Activated T-helper 1 cell treated with anti-CD3 and anti-CD28 coated beads, Interleukin-12 subunit alpha, Interleukin-12 subunit beta, Interleukin-2, Interleukin-4 antibody, amounts not matched to agents 30 ng/mL and 10 ng/mL and 1 ng/mL, durations not matched to agents 14 hours and 24 hours and 36 hours (primary cell): ENCODE measurements at regions of chrX and their contacts with region 1.

Region 1: DNA sequence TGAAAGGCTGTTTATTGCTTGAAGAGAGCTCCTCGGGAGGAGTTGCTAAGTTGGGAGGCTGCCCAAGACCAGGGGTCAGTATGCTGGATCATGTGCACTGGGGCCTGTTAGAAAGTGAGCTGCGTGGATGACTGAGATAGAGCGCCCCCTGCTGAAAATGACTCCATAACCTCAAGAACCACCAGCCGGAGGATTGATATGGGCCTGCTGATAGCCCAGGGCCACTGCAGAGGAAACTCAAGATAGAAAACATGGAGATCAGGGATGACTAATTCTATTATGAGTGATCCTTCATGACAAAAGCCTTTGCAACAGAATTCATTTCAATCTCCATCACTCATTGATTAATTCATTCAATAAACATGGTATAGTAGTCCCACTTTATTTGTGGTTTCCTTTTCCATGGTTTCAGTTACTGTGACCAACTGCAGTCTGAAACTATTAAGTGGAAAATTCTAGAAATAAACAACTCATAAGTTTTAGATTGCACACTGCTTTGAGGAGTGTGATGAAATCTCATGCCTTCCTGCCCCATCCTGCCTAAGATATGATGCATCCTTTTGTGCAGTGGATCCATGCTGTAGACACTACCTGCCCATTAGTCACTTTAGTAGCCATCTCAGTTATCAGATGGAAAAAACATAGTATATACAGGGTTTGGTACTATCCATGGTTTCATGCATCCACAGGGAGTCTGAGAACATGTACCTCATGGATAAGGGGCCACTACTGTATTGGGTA is 126.7 kb upstream of the MBNL3 start:
- DNase-seq: peak; percentile 5
- H3K4me3 Mint-ChIP-seq: no peak overlapping the region
- H3K27ac Mint-ChIP-seq: peak overlapping the region; percentile 2
- H3K4me1 Mint-ChIP-seq: no peaks in the 10 kb centered on the region
- H3K27me3 Mint-ChIP-seq: no peaks in the 10 kb centered on the region

Region 2: DNA sequence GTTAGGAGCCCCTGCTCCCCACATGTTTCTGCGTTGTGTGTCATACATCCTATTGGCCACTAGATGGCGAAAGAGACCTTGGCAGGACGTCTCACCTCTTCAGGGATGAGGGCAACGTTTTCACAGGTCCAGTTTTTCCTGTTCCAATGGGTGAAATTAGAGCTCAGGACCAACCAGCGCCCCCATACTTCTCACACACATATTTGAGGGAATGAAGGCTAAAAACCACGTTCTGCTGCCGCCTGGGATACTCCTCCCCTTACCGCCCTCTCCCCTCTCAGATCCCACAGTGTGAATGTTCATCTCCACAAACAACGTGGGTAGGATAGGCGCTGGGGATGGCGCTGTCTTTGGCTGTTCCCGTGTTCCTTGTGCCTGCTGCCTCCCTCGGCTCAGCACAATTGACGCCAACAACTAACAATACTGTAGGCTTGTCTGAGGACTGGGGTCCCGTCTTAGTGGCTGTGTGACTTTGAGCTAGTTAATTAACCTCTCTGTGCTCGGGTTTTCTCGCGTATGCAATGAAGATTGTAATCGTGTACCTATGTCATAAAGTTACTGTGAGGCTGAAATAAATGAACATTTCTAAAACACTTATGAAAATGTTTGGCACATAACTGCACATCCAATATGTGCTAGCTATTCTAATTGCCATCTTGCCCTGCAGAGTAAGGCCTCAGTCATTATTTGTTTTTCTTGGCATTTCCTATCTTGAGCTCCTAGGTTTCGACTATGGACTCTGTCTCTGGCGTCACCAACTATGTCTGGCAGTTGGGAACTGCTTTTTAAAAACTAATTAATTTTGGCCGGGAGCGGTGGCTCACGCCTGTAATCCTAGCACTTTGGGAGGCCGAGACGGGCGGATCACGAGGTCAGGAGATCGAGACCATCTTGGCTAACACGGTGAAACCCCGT is 773.8 kb before region 1 on chrX:
- intact Hi-C with region 1: loop called (anchors 5 kb)
- DNase-seq: no peak
- H3K4me3 Mint-ChIP-seq: no peak overlapping the region
- H3K27ac Mint-ChIP-seq: no peak overlapping the region
- H3K4me1 Mint-ChIP-seq: no peaks in the 10 kb centered on the region
- H3K27me3 Mint-ChIP-seq: no peaks in the 10 kb centered on the region

Region 3: GRCh38 chrX:132092439-132093065 is 523.0 kb before region 1 on chrX:
- intact Hi-C with region 1: loop called (anchors 10 kb)
- DNase-seq: peak; percentile 0
- H3K4me3 Mint-ChIP-seq: no peak overlapping the region
- H3K27ac Mint-ChIP-seq: no peak overlapping the region
- H3K4me1 Mint-ChIP-seq: peaks cover 11% of the 10 kb centered on the region
- H3K27me3 Mint-ChIP-seq: no peaks in the 10 kb centered on the region

Region 4: DNA sequence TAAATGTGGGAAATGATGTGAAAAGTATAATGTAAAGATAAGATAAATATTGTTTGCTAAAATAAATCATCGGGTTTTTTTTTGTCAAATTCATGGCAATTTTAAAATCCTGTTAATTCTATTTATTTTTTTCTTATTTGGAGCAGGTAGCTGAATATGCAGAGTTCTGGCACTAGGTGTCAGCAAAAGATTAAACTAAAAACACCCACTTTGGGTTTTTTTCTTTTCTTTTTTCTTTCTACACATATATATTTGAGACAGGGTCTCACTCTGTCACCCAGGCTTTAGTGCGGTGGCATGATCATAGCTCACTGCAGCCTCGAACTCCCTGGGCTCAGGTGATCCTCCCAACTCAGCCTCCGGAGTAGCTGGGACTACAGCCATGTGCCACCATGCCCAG is 389.4 kb before region 1 on chrX:
- intact Hi-C with region 1: loop called (anchors 1 kb)
- DNase-seq: no peak
- H3K4me3 Mint-ChIP-seq: no peak overlapping the region
- H3K27ac Mint-ChIP-seq: no peak overlapping the region
- H3K4me1 Mint-ChIP-seq: no peaks in the 10 kb centered on the region
- H3K27me3 Mint-ChIP-seq: peaks cover 3% of the 10 kb centered on the region

Region 5: DNA sequence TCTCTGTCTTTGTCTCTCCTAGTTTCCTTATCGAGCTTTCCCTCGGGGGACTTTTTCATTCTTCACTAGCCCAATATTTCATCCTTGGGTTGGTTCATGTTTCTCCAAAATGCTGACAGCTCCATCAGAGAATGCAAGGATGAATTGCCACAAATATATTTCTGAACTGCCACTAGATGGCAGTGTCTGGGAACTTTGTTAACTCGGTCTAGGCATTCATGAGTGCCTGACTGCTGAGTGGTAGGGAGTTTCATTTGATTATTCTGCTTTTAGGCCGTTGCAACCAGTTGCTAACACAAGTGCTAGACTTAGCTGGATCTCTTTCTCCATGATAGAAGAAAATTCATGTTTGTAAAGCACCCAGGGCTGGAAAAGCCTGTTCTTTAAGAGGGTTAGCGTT is 322.8 kb before region 1 on chrX:
- intact Hi-C with region 1: loop called (anchors 1 kb)
- DNase-seq: peak; percentile 0
- H3K4me3 Mint-ChIP-seq: no peak overlapping the region
- H3K27ac Mint-ChIP-seq: no peak overlapping the region
- H3K4me1 Mint-ChIP-seq: no peaks in the 10 kb centered on the region
- H3K27me3 Mint-ChIP-seq: no peaks in the 10 kb centered on the region